ENCODE measurements at regions of chr7 and their contacts with region 1.

Region 1: GRCh38 chr7:135147899-135148721 is at the start of gene TMEM140:
- DNase-seq: peak; percentile 36 to 91 (median 63)
- ATAC-seq: peak; percentile 78
- H3K4me3 ChIP-seq: peak within 1 kb of the TSS; percentile 60 to 70
- H3K4me3 Mint-ChIP-seq: peak within 1 kb of the TSS; percentile 87
- H3K27ac ChIP-seq: peak within 1 kb of the TSS; percentile 92 to 97
- H3K27ac Mint-ChIP-seq: peak within 1 kb of the TSS; percentile 97
- H3K4me1 ChIP-seq: peaks cover 47% of the 10 kb centered on the region
- H3K4me1 Mint-ChIP-seq: peaks cover 80% of the 10 kb centered on the region
- H3K27me3 ChIP-seq: no peaks in the 10 kb centered on the region
- H3K27me3 Mint-ChIP-seq: no peaks in the 10 kb centered on the region
- CTCF ChIP-seq: no peak
- total RNA-seq, gene TMEM140: 18.8 to 21.8 TPM

Region 2: DNA sequence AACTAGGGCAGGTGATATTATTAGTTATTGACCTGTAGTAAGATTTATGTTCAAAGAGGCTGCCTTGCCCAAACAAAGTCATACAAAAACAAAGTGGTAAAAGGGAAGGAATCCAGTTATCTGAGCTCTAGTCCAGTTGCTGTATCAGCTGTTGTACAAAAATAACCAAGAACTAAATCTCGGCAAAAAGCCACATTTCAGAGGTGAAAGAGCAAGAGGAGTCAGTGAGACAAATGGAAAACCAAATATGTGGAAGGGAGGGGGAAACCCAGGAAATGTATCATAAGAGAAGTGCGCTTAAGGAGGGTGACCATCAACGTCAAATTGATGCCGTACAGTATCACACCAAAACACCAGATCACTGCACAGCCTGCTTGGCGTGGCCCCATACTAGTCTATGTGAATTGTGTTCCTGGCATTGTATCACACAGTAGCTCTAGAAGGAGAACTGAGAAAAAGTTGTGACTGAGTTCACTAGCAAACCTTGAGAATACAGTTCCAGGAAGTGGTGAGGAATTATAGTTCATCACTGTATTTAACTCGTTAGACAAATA is 155.4 kb before region 1 on chr7:
- CTCF ChIA-PET with region 1: interaction called, 7 read pairs
- POLR2A ChIA-PET with region 1: interaction called, 34 read pairs
- intact Hi-C with region 1: no loop called
- DNase-seq: peak in 5 of 9 experiments; percentile 13 to 66 (median 41)
- ATAC-seq: peak; percentile 58
- H3K4me3 ChIP-seq: peak overlapping the region in 1 of 2 experiments; percentile 11
- H3K4me3 Mint-ChIP-seq: peak overlapping the region; percentile 59
- H3K27ac ChIP-seq: peak overlapping the region; percentile 49 to 58
- H3K27ac Mint-ChIP-seq: peak overlapping the region; percentile 91
- H3K4me1 ChIP-seq: peaks cover 83% of the 10 kb centered on the region
- H3K4me1 Mint-ChIP-seq: peaks cover 81% of the 10 kb centered on the region
- H3K27me3 ChIP-seq: no peaks in the 10 kb centered on the region
- H3K27me3 Mint-ChIP-seq: no peaks in the 10 kb centered on the region
- CTCF ChIP-seq: no peak

Region 3: DNA sequence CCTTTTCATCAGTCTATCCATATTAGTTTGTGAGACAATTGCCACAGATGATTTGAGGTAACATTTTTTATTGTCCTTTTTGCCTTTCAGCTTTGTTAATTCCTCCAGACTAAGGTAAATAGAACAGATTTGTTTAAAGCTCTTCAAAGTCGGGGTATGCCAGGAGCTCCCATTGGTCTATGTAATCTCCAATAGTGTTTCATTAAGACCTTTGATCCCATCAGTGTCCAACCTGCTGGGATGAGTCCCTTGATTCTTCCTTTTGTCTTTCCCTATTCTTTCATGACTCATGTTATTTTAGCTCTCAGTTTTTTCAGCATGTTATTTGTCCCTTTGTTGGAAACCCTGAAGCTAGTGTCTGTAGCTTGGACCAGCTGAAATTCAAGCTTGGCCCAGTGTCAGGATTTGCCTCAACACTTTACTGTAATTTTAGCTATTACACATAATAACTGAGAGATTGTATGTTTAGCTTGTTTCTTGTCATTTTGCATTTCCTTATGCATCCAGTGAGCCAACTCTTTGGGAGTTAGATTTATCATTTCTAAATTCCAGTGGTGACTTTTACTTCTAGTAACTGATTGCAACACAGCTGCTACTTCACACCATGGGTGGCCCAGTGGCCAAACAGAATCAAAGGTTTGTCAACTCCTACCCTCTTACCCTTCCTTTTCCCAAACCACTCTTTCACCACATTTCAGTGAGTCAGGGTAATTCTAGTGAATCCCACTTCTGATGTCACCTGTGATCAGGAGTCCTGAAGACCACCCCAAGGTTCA is 146.5 kb before region 1 on chr7:
- CTCF ChIA-PET with region 1: no interaction called
- POLR2A ChIA-PET with region 1: interaction called, 22 read pairs
- intact Hi-C with region 1: no loop called
- DNase-seq: no peak
- ATAC-seq: no peak
- H3K4me3 ChIP-seq: no peak overlapping the region
- H3K4me3 Mint-ChIP-seq: no peak overlapping the region
- H3K27ac ChIP-seq: no peak overlapping the region
- H3K27ac Mint-ChIP-seq: no peak overlapping the region
- H3K4me1 ChIP-seq: peaks cover 25% of the 10 kb centered on the region
- H3K4me1 Mint-ChIP-seq: peaks cover 24% of the 10 kb centered on the region
- H3K27me3 ChIP-seq: no peaks in the 10 kb centered on the region
- H3K27me3 Mint-ChIP-seq: no peaks in the 10 kb centered on the region
- CTCF ChIP-seq: no peak

Region 4: GRCh38 chr7:135160098-135160857 is 12.2 kb after region 1 on chr7:
- CTCF ChIA-PET with region 1: interaction called, 7 read pairs
- POLR2A ChIA-PET with region 1: interaction called, 70 read pairs
- intact Hi-C with region 1: loop called in 1 of 2 experiments (anchors 1 kb)
- DNase-seq: peak in 1 of 9 experiments; percentile 36
- ATAC-seq: no peak
- H3K4me3 ChIP-seq: no peak overlapping the region
- H3K4me3 Mint-ChIP-seq: no peak overlapping the region
- H3K27ac ChIP-seq: peak overlapping the region in 1 of 2 experiments; percentile 53
- H3K27ac Mint-ChIP-seq: peak overlapping the region; percentile 72
- H3K4me1 ChIP-seq: peaks cover 27% of the 10 kb centered on the region
- H3K4me1 Mint-ChIP-seq: peaks cover 64% of the 10 kb centered on the region
- H3K27me3 ChIP-seq: no peaks in the 10 kb centered on the region
- H3K27me3 Mint-ChIP-seq: no peaks in the 10 kb centered on the region
- CTCF ChIP-seq: no peak